ENCODE measurements at regions of chr7 and their contacts with region 1.

Region 1: GRCh38 chr7:102097584-102098161 is 189.0 kb upstream of the SH2B2 start:
- DNase-seq: no peak
- ATAC-seq: no peak
- H3K4me3 ChIP-seq: no peak overlapping the region
- H3K27ac ChIP-seq: no peak overlapping the region
- H3K4me1 ChIP-seq: peaks cover 0 to 11% of the 10 kb centered on the region in 2 donors
- H3K27me3 ChIP-seq: no peaks in the 10 kb centered on the region
- CTCF ChIP-seq: no peak
- POLR2A ChIP-seq: no peak

Region 2: GRCh38 chr7:101764221-101764620 is 333.5 kb before region 1 on chr7:
- in situ Hi-C with region 1: no loop called
- intact Hi-C with region 1: no loop called
- DNase-seq: no peak
- ATAC-seq: no peak
- H3K4me3 ChIP-seq: no peak overlapping the region
- H3K27ac ChIP-seq: no peak overlapping the region
- H3K4me1 ChIP-seq: no peaks in the 10 kb centered on the region
- H3K27me3 ChIP-seq: no peaks in the 10 kb centered on the region
- CTCF ChIP-seq: no peak
- POLR2A ChIP-seq: no peak

Region 3: DNA sequence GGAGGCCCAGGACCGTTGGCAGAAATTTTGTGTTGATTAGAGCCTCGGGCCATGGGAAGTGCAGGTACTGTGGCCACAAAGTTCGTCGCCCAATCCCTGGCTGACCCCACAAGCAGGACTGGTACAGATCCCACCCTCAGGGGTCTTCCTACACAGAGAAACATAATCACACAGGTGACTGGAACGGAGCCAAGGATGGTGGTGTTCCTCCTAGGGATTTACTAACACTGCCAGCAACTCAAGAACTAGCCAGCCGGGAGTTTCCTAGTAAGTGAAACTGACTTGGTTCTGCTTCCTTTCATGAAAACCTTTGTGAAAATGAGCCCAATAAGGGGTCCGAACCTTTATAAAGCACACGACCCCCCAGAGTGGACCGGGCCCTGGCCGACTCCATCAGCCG is 274.6 kb before region 1 on chr7:
- in situ Hi-C with region 1: no loop called
- intact Hi-C with region 1: loop called (anchors 10 kb)
- DNase-seq: peak in 1 of 2 donors; percentile 35
- ATAC-seq: peak in 1 of 2 donors; percentile 24
- H3K4me3 ChIP-seq: peak overlapping the region in 1 of 4 donors; percentile 6
- H3K27ac ChIP-seq: peak overlapping the region; percentile 45 to 54 (median 53)
- H3K4me1 ChIP-seq: peaks cover 56 to 65% of the 10 kb centered on the region in 2 donors
- H3K27me3 ChIP-seq: no peaks in the 10 kb centered on the region
- CTCF ChIP-seq: no peak
- POLR2A ChIP-seq: no peak

Region 4: DNA sequence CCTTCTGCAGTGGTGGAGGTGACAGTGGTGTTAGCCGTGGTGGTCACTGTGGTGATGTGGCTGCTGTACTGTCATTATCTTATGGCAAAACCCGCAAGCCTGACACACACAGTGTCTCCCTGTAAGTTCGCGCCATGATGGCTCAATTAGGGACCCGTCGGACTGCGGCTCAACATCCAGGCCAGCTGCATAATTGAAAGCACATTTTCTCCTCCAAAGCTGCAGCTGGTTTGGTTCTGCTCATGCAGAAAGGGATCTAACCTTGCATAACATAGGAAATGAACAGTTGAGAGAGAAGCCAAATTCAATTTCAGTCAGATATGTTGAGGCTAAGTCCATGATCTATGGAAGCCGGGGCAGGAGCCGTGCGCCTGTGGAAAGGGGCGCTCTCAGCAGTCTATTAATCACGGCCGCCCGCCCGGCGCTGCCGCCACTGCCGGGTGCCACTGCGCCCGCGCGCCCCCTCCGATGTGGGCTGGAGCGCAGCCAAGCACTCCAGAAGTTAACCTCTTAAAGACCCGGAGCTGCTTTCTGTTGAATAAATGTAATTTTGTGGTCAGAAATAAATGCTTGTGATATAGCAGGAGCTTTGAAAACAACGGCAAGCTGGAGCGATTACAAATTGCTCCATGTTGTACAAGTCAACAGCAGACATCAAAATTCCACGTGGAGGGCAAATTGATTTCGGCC is 52.5 kb before region 1 on chr7:
- in situ Hi-C with region 1: no loop called
- intact Hi-C with region 1: loop called (anchors 10 kb)
- DNase-seq: peak in 1 of 2 donors; percentile 40
- ATAC-seq: peak; percentile 51 to 55
- H3K4me3 ChIP-seq: peak overlapping the region; percentile 17 to 48 (median 41)
- H3K27ac ChIP-seq: peak overlapping the region; percentile 16 to 34 (median 28)
- H3K4me1 ChIP-seq: peaks cover 17 to 19% of the 10 kb centered on the region in 2 donors
- H3K27me3 ChIP-seq: no peaks in the 10 kb centered on the region
- CTCF ChIP-seq: no peak
- POLR2A ChIP-seq: no peak

Region 5: GRCh38 chr7:102132209-102132752 is 34.6 kb after region 1 on chr7:
- in situ Hi-C with region 1: no loop called
- intact Hi-C with region 1: no loop called
- DNase-seq: no peak
- ATAC-seq: peak in 1 of 2 donors; percentile 18
- H3K4me3 ChIP-seq: no peak overlapping the region
- H3K27ac ChIP-seq: no peak overlapping the region
- H3K4me1 ChIP-seq: no peaks in the 10 kb centered on the region
- H3K27me3 ChIP-seq: no peaks in the 10 kb centered on the region
- CTCF ChIP-seq: no peak
- POLR2A ChIP-seq: no peak

Region 6: GRCh38 chr7:102189756-102190155 is 92.1 kb after region 1 on chr7:
- in situ Hi-C with region 1: no loop called
- intact Hi-C with region 1: loop called (anchors 10 kb)
- DNase-seq: no peak
- ATAC-seq: peak in 1 of 2 donors; percentile 29
- H3K4me3 ChIP-seq: no peak overlapping the region
- H3K27ac ChIP-seq: no peak overlapping the region
- H3K4me1 ChIP-seq: peaks cover 4 to 9% of the 10 kb centered on the region in 2 donors
- H3K27me3 ChIP-seq: no peaks in the 10 kb centered on the region
- CTCF ChIP-seq: no peak
- POLR2A ChIP-seq: no peak

Measured in gastrocnemius medialis (tissue), 4 donors.